Activated CD4-positive, alpha-beta T cell treated with anti-CD3 and anti-CD28 coated beads, Interleukin-2, amount 10 ng/mL, durations not matched to agents 24 days and 14 days (primary cell): ENCODE measurements at regions of chr1 and their contacts with region 1.

Region 1: DNA sequence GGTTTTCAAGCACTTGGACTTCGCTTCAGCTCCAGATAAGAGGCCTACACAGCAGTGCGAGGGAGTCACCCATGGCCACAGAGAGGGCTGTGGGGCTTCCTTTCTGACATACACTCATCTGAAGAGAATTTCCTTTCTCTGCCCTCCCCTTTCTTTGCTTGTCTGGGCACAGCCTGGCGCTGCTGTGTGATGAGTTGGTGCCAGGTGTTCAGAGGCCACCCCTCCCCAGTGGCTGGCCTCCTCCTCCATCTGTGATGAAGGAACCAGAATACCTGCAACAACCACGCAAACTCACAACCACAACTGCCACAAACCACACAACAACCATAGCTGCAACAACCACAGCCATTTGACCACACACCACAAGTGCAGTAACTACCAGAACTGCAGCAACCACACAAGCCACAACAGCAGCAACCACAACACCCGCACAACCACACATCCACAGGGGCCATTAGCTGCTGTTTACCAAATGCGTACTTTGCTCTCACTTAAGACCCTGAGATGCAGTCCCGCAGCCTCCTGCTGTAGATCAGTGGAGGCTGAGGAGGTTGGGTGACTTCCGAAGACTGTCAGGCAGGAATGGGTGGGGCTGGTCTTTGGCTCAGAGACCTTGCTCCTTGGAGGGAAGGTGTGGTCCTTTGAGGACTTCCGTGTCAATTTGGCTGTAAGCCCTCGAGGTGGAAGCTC is 71.1 kb downstream of the IER5 start:
- DNase-seq: peak; percentile 89
- H3K4me3 Mint-ChIP-seq: peak overlapping the region; percentile 37
- H3K27ac Mint-ChIP-seq: peak overlapping the region; percentile 71
- H3K4me1 Mint-ChIP-seq: peaks cover 24% of the 10 kb centered on the region
- H3K27me3 Mint-ChIP-seq: peaks cover 21% of the 10 kb centered on the region

Region 2: DNA sequence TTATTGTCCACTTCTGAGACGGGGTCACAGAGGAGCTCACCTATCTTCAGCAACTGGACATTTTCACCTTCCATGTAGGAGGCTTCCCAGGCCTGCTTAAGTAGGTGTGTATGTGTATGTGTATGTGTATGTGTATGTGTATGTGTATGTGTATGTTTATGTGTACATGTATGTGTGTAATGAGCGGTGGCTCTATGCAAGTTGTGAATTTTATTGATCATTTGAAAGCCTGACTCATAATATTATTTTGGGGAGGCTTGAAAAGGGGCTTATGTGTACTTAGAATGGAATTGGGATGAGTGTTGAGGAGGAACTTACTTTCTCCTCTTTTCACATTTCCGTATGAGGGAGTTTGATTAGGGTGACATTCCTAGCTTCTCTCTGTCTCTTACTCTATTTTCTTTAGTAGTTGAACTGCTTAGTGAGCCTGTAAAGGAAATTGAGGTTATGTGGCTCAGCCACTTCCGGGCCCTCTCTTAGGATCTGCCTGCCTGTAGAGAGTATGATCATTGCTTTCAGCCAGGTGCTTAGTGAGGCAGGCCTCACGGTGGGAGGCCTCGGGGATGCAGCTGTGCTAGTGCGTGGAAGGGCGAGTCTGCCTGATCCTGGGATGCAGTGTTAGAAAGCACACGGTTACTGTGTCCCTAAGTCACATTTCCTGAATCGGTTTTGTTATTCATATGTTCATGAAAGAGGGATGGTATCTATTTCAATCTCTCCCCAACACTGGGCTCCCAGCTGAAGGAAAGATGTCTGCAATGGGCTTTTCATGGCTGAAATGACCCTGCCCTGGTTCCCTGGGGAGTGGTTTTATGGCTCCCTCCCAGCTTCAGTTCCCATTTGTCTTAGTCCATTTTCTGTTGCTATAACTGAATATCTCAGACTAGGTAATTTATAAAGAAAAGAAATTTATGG is 10.0 kb before region 1 on chr1:
- intact Hi-C with region 1: loop called (anchors 1 kb)
- DNase-seq: peak; percentile 94
- H3K4me3 Mint-ChIP-seq: peak overlapping the region; percentile 61
- H3K27ac Mint-ChIP-seq: peak overlapping the region; percentile 87
- H3K4me1 Mint-ChIP-seq: peaks cover 45% of the 10 kb centered on the region
- H3K27me3 Mint-ChIP-seq: peaks cover 9% of the 10 kb centered on the region

Region 3: DNA sequence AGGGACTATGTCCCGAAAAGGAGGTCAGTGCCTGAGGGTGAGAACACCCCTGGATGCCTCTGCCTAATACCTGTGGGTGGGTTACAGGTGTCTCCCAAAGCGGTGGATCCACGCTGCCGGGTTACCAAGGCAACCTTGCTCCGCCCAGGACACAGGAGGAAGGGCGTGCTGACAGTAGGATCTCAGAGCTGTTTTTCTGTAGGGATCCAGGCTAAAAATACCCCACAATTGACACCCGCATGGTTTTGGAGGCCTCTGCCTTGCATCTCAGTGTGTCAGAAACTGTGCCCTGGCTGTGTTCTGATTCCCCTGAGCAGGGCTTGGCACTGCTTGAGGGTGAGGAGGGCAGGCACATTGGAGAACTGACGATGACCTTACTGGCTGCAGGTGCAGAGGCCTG is 46.9 kb after region 1 on chr1:
- intact Hi-C with region 1: no loop called
- DNase-seq: no peak
- H3K4me3 Mint-ChIP-seq: no peak overlapping the region
- H3K27ac Mint-ChIP-seq: no peak overlapping the region
- H3K4me1 Mint-ChIP-seq: no peaks in the 10 kb centered on the region
- H3K27me3 Mint-ChIP-seq: peaks cover 13% of the 10 kb centered on the region